Activated CD4-positive, alpha-beta memory T cell treated with anti-CD3 and anti-CD28 coated beads, Interleukin-2, amount 10 ng/mL, durations not matched to agents 7 days and 5 days (primary cell): ENCODE measurements at regions of chr12 and their contacts with region 1.

Region 1: GRCh38 chr12:57520053-57520871 is at the start of gene DDIT3:
- DNase-seq: peak; percentile 100
- H3K4me3 Mint-ChIP-seq: peak within 1 kb of the TSS; percentile 82
- H3K27ac Mint-ChIP-seq: peak within 1 kb of the TSS; percentile 100
- H3K4me1 Mint-ChIP-seq: peaks cover 59% of the 10 kb centered on the region
- H3K27me3 Mint-ChIP-seq: no peaks in the 10 kb centered on the region
- total RNA-seq, gene DDIT3: 19.1 to 22.7 TPM

Region 2: DNA sequence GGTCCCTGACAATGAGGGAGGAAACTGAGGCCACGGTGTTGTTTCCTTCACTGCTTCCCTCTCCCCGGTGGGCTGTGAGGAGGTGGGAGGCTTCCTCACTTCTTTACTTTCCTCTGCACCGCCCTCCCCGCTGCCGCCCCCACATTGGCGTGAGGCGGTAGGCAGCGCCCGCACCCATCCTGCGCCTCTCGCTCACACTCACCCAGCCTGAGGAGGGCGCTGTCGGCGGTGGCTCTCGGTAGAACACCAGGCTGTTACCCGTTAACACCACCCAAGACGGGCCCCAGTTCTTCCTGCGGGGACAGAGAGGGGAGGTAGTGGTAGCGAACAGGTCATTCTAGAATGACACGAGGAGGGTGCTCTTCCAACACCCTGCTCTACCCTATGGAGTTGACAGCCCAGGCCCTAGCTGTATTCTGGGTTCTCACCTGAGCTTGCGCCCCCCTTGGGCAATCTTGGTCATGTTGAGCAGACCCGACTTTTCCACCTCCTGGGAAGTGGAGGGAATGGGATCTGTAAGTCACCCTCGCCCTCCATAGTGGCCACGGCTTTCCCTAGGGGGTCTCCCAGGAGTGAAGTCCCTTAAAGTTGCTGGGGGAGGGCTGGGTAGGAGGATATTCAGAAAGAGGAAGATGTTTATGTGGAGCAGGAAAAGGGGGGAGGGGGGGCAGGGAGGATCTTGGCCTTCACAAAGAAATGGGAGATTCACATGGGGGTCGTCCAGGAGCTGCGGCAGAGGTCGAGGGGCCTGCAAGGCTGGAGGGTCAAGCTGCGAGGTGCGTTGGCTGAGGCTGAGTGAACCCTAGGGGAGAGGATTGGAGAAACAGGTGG is 43.9 kb before region 1 on chr12:
- CTCF ChIA-PET with region 1: interaction called, 7 read pairs
- POLR2A ChIA-PET with region 1: interaction called, 30 read pairs
- DNase-seq: peak; percentile 86
- H3K4me3 Mint-ChIP-seq: peak overlapping the region; percentile 89
- H3K27ac Mint-ChIP-seq: peak overlapping the region; percentile 100
- H3K4me1 Mint-ChIP-seq: peaks cover 57% of the 10 kb centered on the region
- H3K27me3 Mint-ChIP-seq: no peaks in the 10 kb centered on the region

Region 3: DNA sequence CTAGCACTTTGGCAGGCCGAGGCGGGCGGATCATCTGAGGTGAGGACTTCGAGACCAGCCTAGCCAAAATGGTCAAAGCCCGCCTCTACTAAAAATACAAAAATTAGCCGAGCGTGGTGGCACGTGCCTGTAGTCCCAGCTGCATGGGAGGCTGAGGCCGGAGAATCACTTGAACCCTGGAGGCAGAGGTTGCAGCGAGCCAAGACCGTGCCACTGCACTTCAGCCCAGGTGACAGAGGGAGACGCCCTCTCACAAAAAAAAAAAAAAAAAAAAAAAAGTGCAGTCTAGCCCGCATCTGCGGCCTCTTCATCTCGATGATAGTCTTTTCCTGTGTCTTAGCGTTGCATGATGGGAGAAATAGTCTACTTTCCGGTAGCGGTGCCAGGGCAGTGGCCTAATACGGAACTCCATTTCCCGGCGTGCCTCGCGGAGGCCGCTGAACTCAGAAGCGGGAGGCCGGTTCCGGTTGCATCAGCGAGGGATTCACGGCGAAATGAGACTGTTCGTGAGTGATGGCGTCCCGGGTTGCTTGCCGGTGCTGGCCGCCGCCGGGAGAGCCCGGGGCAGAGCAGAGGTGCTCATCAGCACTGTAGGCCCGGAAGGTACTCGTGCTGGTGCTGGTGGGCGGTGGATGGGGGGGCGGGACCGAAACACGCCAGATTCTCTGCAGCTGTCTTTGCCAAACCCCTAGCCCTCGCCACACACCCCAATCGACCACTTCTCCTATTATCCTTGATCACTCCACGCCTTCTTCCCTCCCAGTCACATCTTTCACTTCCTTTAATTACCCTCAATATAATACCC is 32.5 kb before region 1 on chr12 and contains the start of gene MARS1:
- CTCF ChIA-PET with region 1: interaction called, 3 read pairs
- POLR2A ChIA-PET with region 1: interaction called, 24 read pairs
- DNase-seq: peak; percentile 95
- H3K4me3 Mint-ChIP-seq: peak within 1 kb of the TSS; percentile 86
- H3K27ac Mint-ChIP-seq: peak within 1 kb of the TSS; percentile 78
- H3K4me1 Mint-ChIP-seq: peaks cover 39% of the 10 kb centered on the region
- H3K27me3 Mint-ChIP-seq: no peaks in the 10 kb centered on the region
- total RNA-seq, gene MARS1: 262 to 282 TPM

Region 4: GRCh38 chr12:57498132-57498502 is 22.1 kb before region 1 on chr12:
- CTCF ChIA-PET with region 1: interaction called, 3 read pairs
- POLR2A ChIA-PET with region 1: interaction called, 10 read pairs
- DNase-seq: no peak
- H3K4me3 Mint-ChIP-seq: no peak overlapping the region
- H3K27ac Mint-ChIP-seq: no peak overlapping the region
- H3K4me1 Mint-ChIP-seq: peaks cover 5% of the 10 kb centered on the region
- H3K27me3 Mint-ChIP-seq: no peaks in the 10 kb centered on the region

Region 5: DNA sequence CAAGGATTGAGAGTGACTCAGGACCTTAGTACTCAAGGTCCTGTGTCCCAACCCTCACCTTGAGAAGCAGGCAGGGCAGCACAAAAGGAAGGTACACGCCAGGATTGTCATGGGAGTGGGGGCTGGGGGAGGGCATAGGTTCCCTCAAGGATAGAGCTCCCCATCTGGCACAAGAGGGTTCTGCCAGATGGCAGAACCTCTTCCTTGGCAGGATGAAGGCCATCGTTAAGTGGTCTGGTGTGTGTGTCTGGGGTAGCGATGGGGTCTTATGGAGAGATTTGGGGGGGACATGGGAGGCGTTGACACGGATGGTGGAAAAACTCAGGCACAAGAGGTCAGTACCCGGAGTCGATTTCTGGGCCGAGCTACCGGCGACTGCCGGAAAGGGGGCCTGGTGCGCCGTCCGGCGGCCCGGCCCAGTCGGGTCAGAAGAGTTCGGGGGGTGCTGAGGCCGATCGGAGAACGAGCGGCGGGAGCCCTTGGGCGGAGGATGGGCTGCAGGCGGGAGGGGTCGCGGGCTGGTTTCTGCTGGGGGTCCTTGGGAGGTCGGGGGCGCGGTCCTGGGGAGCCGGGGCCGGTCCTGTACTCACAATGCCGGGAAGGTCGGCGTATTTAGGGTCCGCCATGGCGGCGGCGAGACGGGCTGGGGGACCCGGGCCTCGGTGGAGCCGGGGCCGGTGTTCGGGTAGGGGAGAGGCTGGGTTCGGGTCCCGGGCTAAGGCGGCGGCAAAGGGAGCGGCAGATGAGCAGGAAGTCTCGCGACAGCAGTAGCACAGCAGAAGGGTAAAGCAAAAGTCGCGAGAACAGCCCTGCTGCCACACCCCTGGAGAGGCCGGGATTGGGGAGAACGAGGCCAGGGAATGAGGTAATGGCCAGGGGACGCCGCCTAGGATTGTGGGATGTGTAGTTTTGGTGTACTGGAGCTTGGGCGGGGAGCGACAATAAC is 26.4 kb after region 1 on chr12 and contains the start of gene DCTN2:
- CTCF ChIA-PET with region 1: interaction called, 3 read pairs
- POLR2A ChIA-PET with region 1: interaction called, 22 read pairs
- DNase-seq: peak; percentile 97
- H3K4me3 Mint-ChIP-seq: peak within 1 kb of the TSS; percentile 99
- H3K27ac Mint-ChIP-seq: peak within 1 kb of the TSS; percentile 91
- H3K4me1 Mint-ChIP-seq: peaks cover 60% of the 10 kb centered on the region
- H3K27me3 Mint-ChIP-seq: peaks cover 20% of the 10 kb centered on the region
- total RNA-seq, gene DCTN2: 80.9 to 85.1 TPM

Region 6: GRCh38 chr12:57666897-57667296 is 146.6 kb after region 1 on chr12:
- CTCF ChIA-PET with region 1: no interaction called
- POLR2A ChIA-PET with region 1: no interaction called
- DNase-seq: no peak
- H3K4me3 Mint-ChIP-seq: no peak overlapping the region
- H3K27ac Mint-ChIP-seq: no peak overlapping the region
- H3K4me1 Mint-ChIP-seq: no peaks in the 10 kb centered on the region
- H3K27me3 Mint-ChIP-seq: peaks cover 5% of the 10 kb centered on the region